WTC11 (cell line): ENCODE measurements at regions of chr7 and their contacts with region 1.

Region 1: GRCh38 chr7:131546583-131547111 is 9.8 kb downstream of the PODXL start:
- DNase-seq: peak; percentile 90
- ATAC-seq: peak; percentile 85
- H3K4me3 Mint-ChIP-seq: no peak overlapping the region; the same call in 1 of the 2 replicates
- H3K27ac Mint-ChIP-seq: no peak overlapping the region
- H3K4me1 Mint-ChIP-seq: peaks cover 95% of the 10 kb centered on the region
- H3K27me3 Mint-ChIP-seq: no peaks in the 10 kb centered on the region
- CTCF ChIP-seq: peak; percentile 95

Region 2: DNA sequence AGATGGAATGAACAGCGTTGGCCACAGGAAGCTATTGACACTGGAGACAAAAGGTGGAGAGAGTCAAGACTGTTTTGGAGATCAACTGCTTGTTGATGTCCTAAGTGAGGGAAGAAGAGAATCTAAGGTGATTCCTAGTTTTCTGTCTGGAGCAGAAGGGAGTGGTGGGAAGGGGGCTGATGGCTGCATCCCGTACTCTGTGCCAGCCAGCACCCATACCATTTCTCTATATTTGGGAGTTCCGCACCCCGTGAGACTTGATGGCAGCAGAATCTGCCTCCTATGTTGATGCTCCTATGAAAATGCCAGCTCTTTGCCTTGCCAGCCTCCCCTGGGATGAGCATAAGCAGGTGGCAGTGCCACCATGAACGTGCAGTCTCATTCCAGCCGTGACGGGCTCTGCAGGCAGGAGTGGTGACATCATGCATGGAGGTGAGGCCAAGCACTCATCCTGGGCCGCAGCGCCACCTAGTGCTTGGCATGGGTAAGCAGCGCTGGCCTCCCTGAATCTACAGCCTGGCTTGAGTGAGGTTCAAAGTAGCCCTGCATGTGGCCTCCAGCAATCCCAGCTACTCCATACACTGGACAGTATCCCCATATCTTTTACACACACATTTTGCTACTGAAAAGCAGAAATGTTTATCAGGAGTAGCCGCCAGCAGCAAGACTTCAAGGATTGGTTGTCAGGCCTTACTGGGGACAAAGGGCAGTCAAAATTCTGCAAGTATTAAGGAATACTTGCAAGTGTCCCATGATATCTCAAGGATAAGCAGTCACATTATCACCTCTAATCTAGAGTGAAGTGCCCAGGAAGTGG is 33.2 kb before region 1 on chr7:
- CTCF ChIA-PET with region 1: interaction called, 29 read pairs
- POLR2A ChIA-PET with region 1: interaction called, 6 read pairs
- DNase-seq: peak; percentile 90
- ATAC-seq: peak; percentile 94
- H3K4me3 Mint-ChIP-seq: no peak overlapping the region
- H3K27ac Mint-ChIP-seq: peak overlapping the region; percentile 97
- H3K4me1 Mint-ChIP-seq: peaks cover 76% of the 10 kb centered on the region
- H3K27me3 Mint-ChIP-seq: no peaks in the 10 kb centered on the region
- CTCF ChIP-seq: peak; percentile 98

Region 3: GRCh38 chr7:131533151-131533559 is 13.5 kb before region 1 on chr7:
- CTCF ChIA-PET with region 1: interaction called, 21 read pairs
- POLR2A ChIA-PET with region 1: interaction called, 6 read pairs
- DNase-seq: no peak
- ATAC-seq: no peak
- H3K4me3 Mint-ChIP-seq: no peak overlapping the region
- H3K27ac Mint-ChIP-seq: no peak overlapping the region
- H3K4me1 Mint-ChIP-seq: peaks cover 79% of the 10 kb centered on the region
- H3K27me3 Mint-ChIP-seq: no peaks in the 10 kb centered on the region
- CTCF ChIP-seq: no peak

Region 4: DNA sequence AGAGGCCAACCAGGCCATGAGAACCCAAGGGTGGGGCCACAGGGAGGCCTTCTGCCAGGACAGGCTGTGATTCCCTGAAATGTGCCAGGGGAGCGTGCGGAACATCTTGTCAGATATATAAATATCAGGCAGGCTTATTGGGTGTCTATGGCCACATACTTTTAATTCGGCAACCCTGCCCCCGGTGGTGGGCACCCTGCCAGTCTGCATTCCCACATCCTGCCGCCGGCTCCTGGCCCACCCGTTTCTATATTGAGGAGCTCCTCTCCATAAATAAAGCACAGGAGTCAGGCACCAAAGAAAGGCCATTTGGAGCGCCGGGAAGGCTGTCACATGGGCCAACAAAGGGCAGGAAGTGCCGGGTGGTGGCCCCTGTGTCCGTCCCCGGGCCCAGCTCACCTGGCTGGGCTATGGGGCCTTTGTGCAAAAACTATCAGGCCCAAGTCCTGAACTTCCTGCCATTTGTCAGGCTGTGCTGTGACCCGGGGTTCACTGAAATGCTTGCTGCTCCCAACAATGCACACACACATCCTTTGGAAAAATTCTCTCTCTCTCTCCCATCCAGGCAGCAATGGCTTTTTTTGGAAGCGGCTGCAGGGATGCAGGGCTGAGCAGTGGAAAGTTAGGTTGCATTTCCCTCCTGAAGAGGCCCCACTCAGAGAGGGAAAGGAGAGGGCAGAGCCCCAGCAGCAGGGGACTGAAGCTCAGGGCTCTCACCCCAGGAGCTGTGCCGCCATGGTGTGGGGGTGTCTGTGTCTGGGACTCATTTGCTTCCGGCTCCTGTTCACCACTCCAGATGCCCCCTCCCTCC is 34.8 kb after region 1 on chr7:
- CTCF ChIA-PET with region 1: interaction called, 23 read pairs
- POLR2A ChIA-PET with region 1: no interaction called
- DNase-seq: no peak
- ATAC-seq: peak; percentile 50
- H3K4me3 Mint-ChIP-seq: no peak overlapping the region
- H3K27ac Mint-ChIP-seq: peak overlapping the region; percentile 49; the same call in 1 of the 2 replicates
- H3K4me1 Mint-ChIP-seq: peaks cover 29% of the 10 kb centered on the region
- H3K27me3 Mint-ChIP-seq: no peaks in the 10 kb centered on the region; the same call in 1 of the 2 replicates
- CTCF ChIP-seq: no peak

Region 5: DNA sequence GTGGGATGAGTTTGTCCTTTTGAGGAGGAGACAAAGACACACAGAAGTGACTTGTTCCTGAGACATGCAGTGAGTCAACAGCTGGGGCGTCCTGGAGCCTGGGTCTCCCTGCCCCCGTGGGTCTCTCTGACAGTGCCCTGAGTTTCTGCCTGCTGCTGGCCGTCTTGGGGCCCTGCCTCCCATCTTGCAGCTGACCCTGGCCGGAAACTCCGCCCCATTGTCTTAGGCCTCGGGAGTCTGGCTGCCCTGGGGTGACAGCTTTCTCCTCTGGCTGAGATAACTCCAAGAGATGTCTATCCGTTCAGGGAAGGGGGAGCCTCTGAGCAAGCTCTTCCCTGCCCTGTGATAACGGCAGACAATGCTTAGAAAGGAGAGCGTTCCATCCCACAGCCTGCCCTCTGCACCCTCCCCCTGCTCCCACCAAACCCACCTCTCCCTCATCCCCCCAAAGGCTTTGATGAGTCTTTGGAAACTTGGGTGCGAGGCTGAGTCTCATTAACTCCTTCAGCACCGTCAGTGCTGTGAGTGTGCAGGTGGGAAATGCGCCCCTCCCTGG is 79.2 kb after region 1 on chr7:
- CTCF ChIA-PET with region 1: interaction called, 42 read pairs
- POLR2A ChIA-PET with region 1: no interaction called
- DNase-seq: peak; percentile 68
- ATAC-seq: peak; percentile 85
- H3K4me3 Mint-ChIP-seq: no peak overlapping the region; the same call in 1 of the 2 replicates
- H3K27ac Mint-ChIP-seq: peak overlapping the region; percentile 98
- H3K4me1 Mint-ChIP-seq: peaks cover 69% of the 10 kb centered on the region
- H3K27me3 Mint-ChIP-seq: peaks cover 16% of the 10 kb centered on the region
- CTCF ChIP-seq: no peak

Region 6: GRCh38 chr7:131654668-131655326 is 108.2 kb after region 1 on chr7:
- CTCF ChIA-PET with region 1: interaction called, 118 read pairs
- POLR2A ChIA-PET with region 1: interaction called, 12 read pairs
- DNase-seq: peak; percentile 97
- ATAC-seq: peak; percentile 87
- H3K4me3 Mint-ChIP-seq: no peak overlapping the region
- H3K27ac Mint-ChIP-seq: no peak overlapping the region
- H3K4me1 Mint-ChIP-seq: peaks cover 46% of the 10 kb centered on the region
- H3K27me3 Mint-ChIP-seq: peaks cover 8% of the 10 kb centered on the region; the same call in 1 of the 2 replicates
- CTCF ChIP-seq: peak; percentile 99